ENCODE measurements at regions of chr2 and their contacts with region 1.

Region 1: DNA sequence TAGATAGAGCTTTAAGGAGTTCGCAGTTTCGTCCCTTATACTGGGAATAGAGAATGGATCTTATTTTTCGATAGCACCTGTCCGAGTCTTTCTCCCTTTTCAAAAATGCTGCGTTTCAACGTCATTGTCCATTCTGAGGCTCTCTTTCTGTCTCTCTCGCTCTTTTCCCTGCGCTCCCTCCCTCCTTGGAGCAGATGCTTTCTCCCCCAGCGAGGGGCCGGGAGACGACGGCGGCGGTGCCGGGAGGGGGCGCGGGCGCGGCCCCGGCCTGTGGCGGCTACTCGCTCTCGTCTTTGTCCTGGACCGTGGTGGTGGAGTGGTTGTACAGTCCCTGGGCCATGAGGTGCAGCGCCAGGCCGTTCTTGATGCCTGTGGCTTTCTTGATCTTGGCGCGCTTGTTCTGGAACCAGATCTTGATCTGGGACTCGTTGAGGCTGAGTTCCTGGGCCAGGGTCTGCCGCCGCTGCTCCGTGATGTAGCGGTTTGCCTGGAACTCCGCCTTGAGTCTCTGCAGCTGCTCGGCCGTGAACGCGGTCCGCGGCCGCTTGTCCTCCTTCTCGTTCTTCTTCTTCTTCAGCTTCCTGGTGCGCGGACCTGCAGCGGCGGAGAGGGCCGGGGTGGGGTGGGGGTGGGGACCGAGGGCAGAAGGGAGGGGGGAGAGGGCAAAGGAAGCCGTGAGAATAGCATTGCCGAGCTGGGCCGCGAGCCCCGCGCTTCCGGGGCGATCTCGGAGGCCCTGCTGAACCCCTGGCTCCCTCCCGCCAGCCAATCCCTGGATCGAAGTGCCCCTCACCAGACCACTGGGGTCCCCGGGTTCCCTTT is 4.6 kb downstream of the EN1 start:
- DNase-seq: no peak
- ATAC-seq: peak in 1 of 4 donors; percentile 21
- H3K4me3 ChIP-seq: peak overlapping the region; percentile 57
- H3K27ac ChIP-seq: peak overlapping the region; percentile 60
- H3K4me1 ChIP-seq: no peaks in the 10 kb centered on the region
- H3K27me3 ChIP-seq: peaks cover 0 to 64% (median 31%) of the 10 kb centered on the region in 3 donors
- CTCF ChIP-seq: no peak

Region 2: DNA sequence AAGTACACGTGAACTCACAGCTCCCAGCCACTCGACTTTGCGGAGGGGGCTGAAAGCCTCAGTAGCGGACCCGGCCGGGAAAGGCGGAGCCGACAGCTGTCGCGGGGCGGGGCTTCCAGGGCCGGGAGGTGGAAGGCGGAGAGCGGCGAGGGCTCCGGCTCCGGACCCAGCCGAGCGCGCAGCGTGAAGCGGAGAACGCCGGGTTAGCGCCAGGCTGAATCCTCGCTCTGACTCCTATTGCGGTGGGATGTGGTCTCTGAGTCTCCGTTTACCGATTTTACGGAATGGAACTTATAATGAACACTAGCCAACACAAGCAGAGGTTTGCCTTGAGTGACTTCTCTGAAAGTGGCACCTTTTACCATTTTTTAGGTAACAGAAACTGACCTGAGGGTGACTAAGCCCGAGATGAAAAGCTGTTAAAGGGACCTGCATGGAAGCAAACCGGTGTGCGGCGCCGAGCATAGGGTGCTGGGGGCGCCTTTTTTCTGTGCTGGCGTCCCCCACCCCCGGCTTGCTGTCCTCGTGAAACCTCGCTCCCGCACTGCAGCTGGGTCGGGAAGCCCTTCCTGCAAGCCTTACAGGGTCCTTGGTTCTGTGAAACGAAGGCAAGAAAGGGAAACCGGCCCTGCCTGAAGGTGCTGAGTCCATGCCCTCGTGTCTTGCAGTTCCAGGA is 68.3 kb before region 1 on chr2:
- intact Hi-C with region 1: loop called in 1 of 2 experiments (anchors 5 kb)
- DNase-seq: peak; percentile 71 to 77
- ATAC-seq: peak; percentile 90 to 99 (median 92)
- H3K4me3 ChIP-seq: peak overlapping the region; percentile 71
- H3K27ac ChIP-seq: no peak overlapping the region
- H3K4me1 ChIP-seq: no peaks in the 10 kb centered on the region
- H3K27me3 ChIP-seq: peaks cover 0 to 30% (median 5%) of the 10 kb centered on the region in 3 donors
- CTCF ChIP-seq: no peak

Measured in psoas muscle (tissue), 8 donors.